Aorta (tissue), 5 donors: ENCODE measurements at regions of chr13 and their contacts with region 1.

Region 1: DNA sequence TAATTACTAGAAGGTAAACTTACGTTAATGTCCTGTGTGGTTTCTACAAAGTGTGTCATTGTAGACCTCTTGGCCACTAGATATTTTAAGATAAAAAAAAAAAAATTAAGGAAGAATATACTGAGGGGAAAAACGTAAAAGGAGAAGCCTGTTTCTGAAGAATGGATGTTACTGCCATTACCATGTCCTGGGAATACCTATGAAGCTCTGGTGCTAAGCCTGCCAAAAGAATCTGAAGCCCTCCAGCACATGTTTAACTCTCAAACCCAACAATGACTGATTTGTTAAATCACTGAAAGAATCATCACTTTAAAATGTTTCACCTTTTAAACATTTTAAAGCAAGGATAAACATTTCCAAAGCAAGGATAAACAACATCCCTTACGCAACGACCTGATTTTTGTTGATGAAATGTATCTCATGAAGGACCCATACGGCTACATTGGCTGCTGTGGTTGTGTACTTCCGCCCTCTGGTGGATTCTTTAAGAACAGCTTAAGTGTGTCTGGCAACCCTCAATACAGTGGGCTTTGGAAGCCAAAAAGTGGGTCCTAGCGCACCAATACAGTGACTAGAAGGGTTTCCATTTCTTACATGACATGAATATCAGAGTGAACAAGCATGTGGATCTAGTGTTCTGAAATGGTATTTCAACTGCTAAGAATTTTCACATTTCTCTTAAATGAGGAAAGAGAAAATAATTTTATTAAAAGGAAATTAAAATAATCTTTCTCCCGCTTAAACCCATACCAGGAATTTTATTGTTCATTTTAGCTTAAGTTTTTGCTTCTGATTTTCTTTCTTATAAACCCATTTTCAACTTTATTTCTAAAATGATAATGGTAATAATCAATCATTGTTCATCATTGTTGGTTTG is 74.5 kb upstream of the RAP2A start:
- DNase-seq: no peak
- ATAC-seq: peak; percentile 90
- H3K4me3 ChIP-seq: no peak overlapping the region
- H3K27ac ChIP-seq: no peak overlapping the region
- H3K4me1 ChIP-seq: no peaks in the 10 kb centered on the region
- H3K27me3 ChIP-seq: no peaks in the 10 kb centered on the region

Region 2: DNA sequence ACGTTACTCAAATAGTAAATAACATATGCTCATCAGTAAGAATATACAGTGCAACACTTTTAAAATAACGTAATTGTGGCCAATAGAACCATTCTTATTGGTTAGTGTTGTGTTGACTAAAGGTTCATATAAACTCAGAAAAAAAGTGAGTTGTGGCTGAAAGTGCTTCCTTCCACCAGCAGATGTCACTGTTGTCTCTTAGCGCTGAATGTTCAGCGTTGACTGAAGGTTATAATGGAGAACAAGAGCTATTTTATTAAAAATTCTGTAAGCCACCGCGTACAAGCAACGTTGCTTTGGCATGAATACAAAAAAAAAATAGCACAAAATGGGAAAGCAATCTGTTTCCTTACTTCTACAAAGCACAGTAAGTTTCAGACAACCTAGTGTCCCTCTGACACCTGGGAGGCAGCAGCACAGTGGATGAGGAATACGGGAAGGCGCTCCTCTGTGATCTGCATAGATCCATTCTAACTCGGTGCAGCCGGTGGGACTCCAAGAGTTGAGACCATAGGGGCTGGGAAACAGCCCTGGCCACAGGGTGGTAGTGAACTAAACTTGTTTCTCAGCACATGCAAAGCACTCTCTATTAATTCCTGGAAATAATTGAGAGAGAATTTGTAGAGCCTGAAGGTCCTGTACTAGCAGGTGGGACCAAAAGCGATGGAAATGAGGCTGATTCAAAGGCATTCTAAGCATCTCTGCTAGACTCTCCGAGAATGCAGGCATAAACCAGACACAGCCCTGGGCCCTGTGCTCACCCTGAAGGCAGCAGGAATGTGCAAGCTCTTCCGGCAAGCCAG is 341.2 kb before region 1 on chr13:
- intact Hi-C with region 1: loop called (anchors 5 to 10 kb)
- DNase-seq: no peak
- ATAC-seq: peak; percentile 73
- H3K4me3 ChIP-seq: peak overlapping the region in 1 of 2 donors; percentile 11
- H3K27ac ChIP-seq: no peak overlapping the region
- H3K4me1 ChIP-seq: no peaks in the 10 kb centered on the region
- H3K27me3 ChIP-seq: no peaks in the 10 kb centered on the region

Region 3: DNA sequence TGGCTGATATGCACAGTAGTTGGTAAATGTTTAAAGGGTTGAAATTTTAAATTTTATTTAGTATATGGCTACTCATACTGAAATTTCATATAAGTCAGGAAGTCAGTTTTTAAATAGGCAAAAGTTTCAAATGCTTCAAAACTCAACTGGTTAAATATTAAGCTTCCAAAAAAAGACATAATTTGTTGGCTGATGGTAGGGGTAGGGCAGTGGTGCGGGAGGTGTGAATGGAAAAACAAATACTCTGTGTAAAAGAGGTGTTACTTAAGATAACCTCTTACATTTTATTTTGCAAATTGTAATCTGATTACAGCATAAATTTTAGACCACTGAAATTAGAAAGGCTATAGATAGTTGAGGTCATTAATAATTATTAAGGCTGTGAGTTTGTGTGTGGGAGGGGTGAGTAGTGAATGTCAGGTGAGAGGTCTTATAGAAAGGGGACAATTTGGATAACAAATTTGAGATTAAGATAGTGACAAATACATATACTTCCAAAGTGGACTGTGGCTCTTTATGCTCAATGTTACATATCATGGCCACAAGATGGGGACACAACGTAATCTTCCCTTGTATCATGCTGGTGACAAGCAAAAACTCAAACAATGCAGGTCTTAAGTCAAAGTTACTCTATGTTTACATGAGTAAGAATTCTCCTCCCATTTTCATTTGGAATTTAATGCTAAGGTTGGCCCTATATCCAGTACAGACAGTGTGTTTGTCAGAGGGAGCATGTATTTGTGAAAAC is 328.5 kb before region 1 on chr13:
- intact Hi-C with region 1: loop called (anchors 5 to 10 kb)
- DNase-seq: no peak
- ATAC-seq: no peak
- H3K4me3 ChIP-seq: no peak overlapping the region
- H3K27ac ChIP-seq: no peak overlapping the region
- H3K4me1 ChIP-seq: peaks cover 2 to 3% of the 10 kb centered on the region in 2 donors
- H3K27me3 ChIP-seq: no peaks in the 10 kb centered on the region

Region 4: DNA sequence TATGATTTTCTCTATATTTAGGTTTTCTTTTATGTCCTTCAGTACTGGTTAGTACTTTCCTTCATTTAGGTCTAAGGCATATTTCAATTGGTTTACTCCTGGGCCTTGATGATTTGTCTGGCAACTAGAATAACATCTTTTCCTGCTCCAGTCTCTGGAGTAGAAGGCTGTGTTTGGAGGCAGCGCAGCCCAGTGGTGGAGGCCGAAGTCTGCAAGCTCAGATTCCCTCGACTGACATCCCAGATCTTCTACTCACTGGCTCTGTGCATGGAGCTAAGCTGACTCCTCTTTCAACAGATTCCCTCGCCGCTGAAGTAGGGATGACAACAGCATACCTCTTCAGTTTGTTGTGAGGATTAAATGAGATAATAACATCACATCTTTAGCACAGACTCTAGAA is 215.5 kb after region 1 on chr13:
- intact Hi-C with region 1: no loop called
- DNase-seq: peak in 1 of 2 donors; percentile 53
- ATAC-seq: no peak
- H3K4me3 ChIP-seq: no peak overlapping the region
- H3K27ac ChIP-seq: no peak overlapping the region
- H3K4me1 ChIP-seq: peaks cover 0 to 1% of the 10 kb centered on the region in 2 donors
- H3K27me3 ChIP-seq: no peaks in the 10 kb centered on the region

Region 5: DNA sequence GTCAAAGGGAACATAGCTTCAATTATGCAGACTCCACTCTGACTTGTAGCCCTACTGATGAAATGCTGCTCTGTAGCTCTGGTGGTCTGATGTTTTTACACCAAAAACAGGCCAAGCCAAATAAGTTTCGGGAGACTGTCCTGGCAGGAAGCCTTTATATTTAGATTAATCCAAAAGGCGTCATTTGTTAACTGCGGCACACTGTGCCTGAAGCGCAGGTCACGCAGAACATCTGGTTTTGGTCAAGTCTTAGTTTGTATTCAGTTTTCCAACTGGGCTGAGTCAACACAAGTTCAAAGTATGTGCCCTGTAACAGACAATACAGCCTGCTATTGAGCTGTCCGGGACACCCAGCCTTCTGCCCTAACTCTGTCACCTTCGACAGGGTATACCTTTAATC is 439.4 kb after region 1 on chr13:
- intact Hi-C with region 1: loop called in 1 of 2 experiments (anchors 10 kb)
- DNase-seq: no peak
- ATAC-seq: no peak
- H3K4me3 ChIP-seq: no peak overlapping the region
- H3K27ac ChIP-seq: peak overlapping the region in 1 of 2 donors; percentile 29
- H3K4me1 ChIP-seq: no peaks in the 10 kb centered on the region
- H3K27me3 ChIP-seq: no peaks in the 10 kb centered on the region

Region 6: DNA sequence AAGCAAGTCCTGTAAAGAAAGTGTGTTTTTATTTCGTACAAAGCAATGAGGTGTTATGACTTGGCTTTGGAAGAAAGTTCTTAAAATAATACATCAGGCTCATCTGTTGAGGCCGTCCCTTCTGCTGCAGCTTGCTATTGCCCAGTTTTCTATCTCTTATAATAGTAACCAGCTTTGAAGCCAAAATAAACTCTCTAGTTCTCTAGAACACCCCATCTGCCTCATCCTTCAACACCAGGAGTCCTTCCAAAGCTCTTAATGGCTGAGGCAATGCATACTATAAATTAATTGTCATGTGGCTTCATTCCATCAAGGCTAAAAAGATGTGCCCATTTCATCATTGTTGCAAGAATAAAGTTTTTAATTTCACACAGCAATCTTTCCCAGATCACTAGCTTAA is 544.6 kb after region 1 on chr13:
- intact Hi-C with region 1: no loop called
- DNase-seq: no peak
- ATAC-seq: no peak
- H3K4me3 ChIP-seq: no peak overlapping the region
- H3K27ac ChIP-seq: no peak overlapping the region
- H3K4me1 ChIP-seq: no peaks in the 10 kb centered on the region
- H3K27me3 ChIP-seq: no peaks in the 10 kb centered on the region